ENCODE measurements at regions of chr17 and their contacts with region 1.

Region 1: DNA sequence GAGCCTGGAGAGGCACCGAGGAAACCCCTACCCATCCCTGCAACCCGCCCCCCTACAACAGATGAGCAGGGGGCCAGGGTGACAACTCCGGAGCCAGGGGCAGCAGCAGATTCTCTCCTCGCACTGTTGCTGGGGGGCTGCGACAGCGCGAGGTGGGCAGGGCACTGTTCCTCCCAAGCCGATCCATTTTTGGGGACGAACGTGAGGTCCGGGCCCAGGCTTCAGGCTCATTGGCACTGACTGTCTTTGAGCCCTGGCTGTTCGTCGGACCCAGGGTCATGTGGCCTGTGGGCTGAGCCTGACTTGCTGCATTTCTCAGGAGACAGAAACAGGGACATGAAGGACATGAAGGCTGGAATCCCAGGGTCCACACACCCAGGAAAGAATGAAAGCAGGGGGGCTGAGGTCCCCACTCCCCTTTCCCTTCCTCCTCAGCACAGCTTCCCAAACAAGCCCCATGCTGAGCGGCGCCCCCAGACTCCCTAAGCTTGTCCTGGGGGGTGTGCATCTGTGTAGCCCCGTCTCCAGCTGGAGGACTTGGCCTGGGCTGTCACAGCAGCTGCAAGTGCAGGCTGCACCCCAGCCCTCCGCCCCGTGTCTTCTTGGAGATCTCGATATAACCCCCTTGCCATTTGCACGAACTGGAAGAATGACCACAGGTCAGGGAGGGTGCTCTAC is 18.7 kb downstream of the CEP295NL start:
- DNase-seq: peak in 1 of 2 experiments; percentile 62
- H3K4me3 ChIP-seq: peak overlapping the region in 2 of 4 experiments; percentile 3 to 41; a peak in 4 of 8 replicates
- H3K27ac ChIP-seq: peak overlapping the region; percentile 15; the same call in 1 of the 2 replicates
- H3K4me1 ChIP-seq: peaks cover 0 to 29% (median 20%) of the 10 kb centered on the region in 4 experiments; a peak in 6 of 7 replicates
- H3K27me3 ChIP-seq: no peaks in the 10 kb centered on the region; a peak in 1 of 7 replicates
- CTCF ChIP-seq: no peak
- EP300 ChIP-seq: no peak
- POLR2A ChIP-seq: no peak; a peak in 1 of 3 replicates
- RAD21 ChIP-seq: no peak

Region 2: DNA sequence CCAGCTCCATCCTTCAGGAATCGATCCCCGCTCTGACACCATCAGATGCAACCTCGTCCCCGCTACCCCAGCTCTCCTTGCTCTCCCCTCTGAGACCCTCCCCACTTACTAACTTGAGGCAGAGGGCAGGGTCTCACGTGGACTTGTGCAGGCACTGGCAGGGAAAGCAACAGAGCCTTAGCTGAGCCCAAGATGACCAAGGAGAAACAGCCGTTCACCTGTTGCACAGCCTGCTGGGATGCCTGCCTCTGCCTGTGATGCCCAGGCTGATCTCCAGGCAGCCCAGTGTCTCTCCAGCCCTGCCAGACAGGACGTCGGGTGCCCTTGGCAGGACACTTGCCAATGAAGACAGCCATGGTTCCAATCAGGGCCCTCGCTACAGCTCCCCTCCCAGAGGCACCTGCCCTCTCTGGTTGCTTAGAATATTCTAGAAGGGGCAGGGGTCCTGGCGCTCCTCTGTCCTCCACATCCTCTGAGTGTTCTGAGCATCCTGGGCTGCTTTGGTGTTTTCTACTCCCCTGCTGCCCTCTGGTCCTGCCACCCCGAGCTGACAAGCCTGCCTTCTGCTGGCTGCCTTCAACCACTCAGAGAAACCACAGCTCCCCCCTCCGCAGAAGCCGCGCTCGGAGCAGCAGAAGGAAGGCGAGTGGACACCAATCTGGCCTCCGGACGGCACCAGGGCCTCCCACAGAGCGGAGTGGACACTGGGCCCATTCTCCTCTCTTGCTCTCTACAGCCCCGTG is 12.0 kb after region 1 on chr17:
- CTCF ChIA-PET with region 1: interaction called, 12 read pairs
- POLR2A ChIA-PET with region 1: interaction called, 4 read pairs
- DNase-seq: no peak
- H3K4me3 ChIP-seq: no peak overlapping the region
- H3K27ac ChIP-seq: no peak overlapping the region
- H3K4me1 ChIP-seq: peaks cover 4 to 24% (median 14%) of the 10 kb centered on the region in 4 experiments
- H3K27me3 ChIP-seq: no peaks in the 10 kb centered on the region
- CTCF ChIP-seq: no peak
- EP300 ChIP-seq: no peak
- POLR2A ChIP-seq: no peak
- RAD21 ChIP-seq: no peak